ENCODE measurements at regions of chr7 and their contacts with region 1.

Region 1: DNA sequence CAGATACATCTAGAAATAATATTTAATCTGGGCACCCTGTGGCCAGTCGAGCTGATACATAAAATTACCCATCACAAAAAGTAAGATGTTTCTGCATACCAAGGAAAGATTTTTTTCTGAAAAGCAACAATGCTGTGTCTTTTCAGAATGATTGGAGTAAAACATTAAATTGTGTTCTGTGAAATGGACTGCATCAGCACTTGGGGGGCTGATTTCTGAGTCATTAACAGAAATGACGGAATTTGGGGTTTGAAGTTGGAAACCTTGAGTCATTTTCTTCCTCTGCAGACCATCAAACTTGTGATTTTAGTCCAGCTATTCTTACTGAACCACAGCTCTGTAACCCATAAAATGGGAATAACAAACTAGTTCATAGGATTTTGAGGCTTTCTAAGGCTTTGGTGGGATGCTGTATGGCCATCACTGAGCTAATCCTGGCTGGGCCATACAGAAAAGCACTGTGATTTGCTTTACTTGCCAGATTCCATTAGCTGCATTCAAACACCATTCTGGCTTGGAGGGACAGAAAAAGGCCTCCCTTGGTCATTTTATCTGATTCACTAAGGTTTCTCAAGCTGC is 739.4 kb upstream of the IGFBP3 start:
- DNase-seq: no peak
- H3K4me3 ChIP-seq: no peak overlapping the region
- H3K27ac ChIP-seq: no peak overlapping the region
- H3K4me1 ChIP-seq: no peaks in the 10 kb centered on the region
- H3K27me3 ChIP-seq: no peaks in the 10 kb centered on the region
- CTCF ChIP-seq: no peak

Region 2: GRCh38 chr7:46525876-46526275 is 134.6 kb before region 1 on chr7:
- intact Hi-C with region 1: loop called (anchors 10 kb)
- DNase-seq: no peak
- H3K4me3 ChIP-seq: no peak overlapping the region
- H3K27ac ChIP-seq: no peak overlapping the region
- H3K4me1 ChIP-seq: no peaks in the 10 kb centered on the region
- H3K27me3 ChIP-seq: no peaks in the 10 kb centered on the region
- CTCF ChIP-seq: no peak